ENCODE measurements at regions of chr15 and their contacts with region 1.

Region 1: DNA sequence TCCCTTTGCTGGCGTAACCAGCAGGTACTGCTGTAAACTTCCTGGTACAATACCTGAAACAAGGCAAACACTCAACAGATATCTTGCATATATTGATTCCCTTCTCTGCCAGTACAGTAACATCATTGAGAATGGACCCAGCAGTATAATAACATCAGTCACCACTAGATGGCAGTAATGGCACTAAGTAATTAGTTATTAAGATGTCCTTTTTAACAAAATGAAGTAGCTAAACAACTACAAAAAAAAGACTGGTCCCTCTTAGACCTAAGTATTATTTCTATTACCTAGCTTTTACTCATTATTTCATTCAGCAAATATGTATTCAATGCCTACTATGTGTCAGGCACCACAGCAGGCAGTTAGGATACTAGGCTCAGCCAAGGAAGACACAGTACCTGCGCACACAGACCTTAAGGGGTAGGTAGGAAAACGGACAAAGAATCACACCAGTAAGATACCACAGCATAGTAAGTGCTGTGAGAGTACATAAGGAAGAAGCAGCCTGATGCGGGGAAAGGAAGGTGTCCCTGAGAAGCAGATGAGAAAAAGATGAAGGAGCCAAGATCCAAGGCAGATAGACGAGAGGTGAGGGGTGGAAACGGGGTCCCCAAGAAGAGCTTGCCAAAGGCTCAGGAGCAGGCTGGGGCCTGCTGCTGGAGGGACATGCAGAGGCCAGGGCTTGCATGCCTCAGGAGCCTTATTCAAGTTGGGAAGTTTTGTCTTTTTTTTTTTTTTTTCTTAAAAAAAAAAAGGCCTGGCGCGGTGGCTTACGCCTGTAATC is 102.8 kb upstream of the CHD2 start:
- DNase-seq: no peak
- ATAC-seq: peak; percentile 68 to 80
- H3K4me3 ChIP-seq: no peak overlapping the region
- H3K27ac ChIP-seq: peak overlapping the region; percentile 72 to 82 (median 79)
- H3K4me1 ChIP-seq: peaks cover 11 to 14% of the 10 kb centered on the region in 2 donors
- H3K27me3 ChIP-seq: no peaks in the 10 kb centered on the region
- CTCF ChIP-seq: peak; percentile 75 to 84 (median 78)
- POLR2A ChIP-seq: no peak

Region 2: DNA sequence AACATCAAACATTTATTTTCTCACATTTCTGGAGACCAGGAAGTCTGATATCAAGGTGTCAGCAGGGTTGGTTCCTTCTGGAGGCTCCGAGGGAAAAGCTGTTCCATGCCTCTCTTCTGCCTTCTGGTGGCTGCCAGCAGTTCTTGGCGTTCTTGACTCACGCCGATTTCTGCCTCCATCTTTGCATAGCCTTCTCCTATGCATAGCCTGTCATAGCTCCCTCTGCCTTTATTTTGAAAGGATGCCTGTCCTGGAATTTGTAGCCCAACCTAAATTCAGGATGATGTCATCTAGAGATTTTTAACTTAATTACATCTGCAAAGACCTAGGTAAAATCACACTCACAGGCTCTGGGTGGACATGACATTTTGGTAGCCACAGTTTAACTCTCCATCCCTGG is 221.2 kb after region 1 on chr15:
- in situ Hi-C with region 1: loop called (anchors 5 to 25 kb)
- intact Hi-C with region 1: no loop called
- DNase-seq: no peak
- ATAC-seq: peak; percentile 50 to 68
- H3K4me3 ChIP-seq: no peak overlapping the region
- H3K27ac ChIP-seq: peak overlapping the region; percentile 8 to 89 (median 41)
- H3K4me1 ChIP-seq: peaks cover 0 to 3% of the 10 kb centered on the region in 2 donors
- H3K27me3 ChIP-seq: no peaks in the 10 kb centered on the region
- CTCF ChIP-seq: peak in 3 of 5 experiments; percentile 27 to 33 (median 32)
- POLR2A ChIP-seq: no peak

Region 3: DNA sequence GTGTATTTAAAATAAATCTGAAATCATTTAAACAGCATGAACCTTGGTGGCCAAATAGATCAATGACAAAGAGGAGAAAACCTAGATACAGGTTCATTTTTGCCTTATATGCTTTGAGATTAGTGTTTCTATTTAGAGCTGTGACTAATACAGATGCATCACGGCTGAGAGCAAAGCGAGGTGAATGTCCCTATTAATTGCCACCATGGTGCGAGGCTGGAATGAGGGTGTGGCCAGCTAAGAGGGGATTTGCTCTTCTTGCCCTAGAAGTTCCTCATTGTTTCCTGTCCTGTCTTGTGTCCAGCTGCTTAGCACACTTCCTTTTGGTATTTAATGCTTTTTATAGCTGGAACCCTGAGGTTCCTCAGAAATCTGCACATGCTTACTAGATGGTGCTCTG is 630.8 kb after region 1 on chr15:
- in situ Hi-C with region 1: loop called in 1 of 4 experiments (anchors 25 kb)
- intact Hi-C with region 1: no loop called
- DNase-seq: peak in 1 of 2 donors; percentile 21
- ATAC-seq: peak; percentile 65 to 77
- H3K4me3 ChIP-seq: no peak overlapping the region
- H3K27ac ChIP-seq: no peak overlapping the region
- H3K4me1 ChIP-seq: peaks cover 5 to 7% of the 10 kb centered on the region in 2 donors
- H3K27me3 ChIP-seq: no peaks in the 10 kb centered on the region
- CTCF ChIP-seq: no peak
- POLR2A ChIP-seq: no peak

Region 4: DNA sequence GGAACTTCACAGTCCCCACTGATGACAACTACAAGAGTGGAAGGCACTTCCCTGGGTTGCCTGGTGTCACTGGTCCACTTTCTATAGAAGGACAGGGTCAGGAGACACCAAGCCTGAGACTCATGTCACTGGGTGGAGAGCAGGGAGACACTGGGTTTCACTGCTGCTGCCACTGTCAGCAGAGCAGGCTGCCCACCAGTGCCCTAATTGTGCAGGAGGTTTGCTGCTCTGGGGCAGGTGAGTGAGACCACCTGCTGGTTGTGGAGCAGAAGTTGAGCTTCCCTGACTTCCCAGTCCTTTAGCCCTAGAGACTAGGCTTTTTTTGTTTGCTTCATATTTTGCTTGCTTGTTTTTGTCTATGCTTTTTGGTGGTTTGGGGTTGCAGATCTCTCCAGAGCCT is 820.1 kb after region 1 on chr15:
- in situ Hi-C with region 1: loop called in 1 of 4 experiments (anchors 25 kb)
- intact Hi-C with region 1: no loop called
- DNase-seq: peak; percentile 3 to 46
- ATAC-seq: peak in 1 of 2 donors; percentile 81
- H3K4me3 ChIP-seq: no peak overlapping the region
- H3K27ac ChIP-seq: no peak overlapping the region
- H3K4me1 ChIP-seq: peaks cover 0 to 2% of the 10 kb centered on the region in 2 donors
- H3K27me3 ChIP-seq: no peaks in the 10 kb centered on the region
- CTCF ChIP-seq: peak in 4 of 5 experiments; percentile 24 to 45 (median 33)
- POLR2A ChIP-seq: no peak

Measured in gastrocnemius medialis (tissue), 4 donors.